CD8-positive, alpha-beta T cell (primary cell): ENCODE measurements at regions of chr4 and their contacts with region 1.

Region 1: GRCh38 chr4:55742655-55743202 is 76.9 kb upstream of the EXOC1L start:
- DNase-seq: no peak
- ATAC-seq: no peak
- H3K4me3 ChIP-seq: no peak overlapping the region
- H3K4me3 Mint-ChIP-seq: no peak overlapping the region
- H3K27ac ChIP-seq: no peak overlapping the region
- H3K27ac Mint-ChIP-seq: no peak overlapping the region
- H3K4me1 ChIP-seq: no peaks in the 10 kb centered on the region
- H3K4me1 Mint-ChIP-seq: no peaks in the 10 kb centered on the region
- H3K27me3 ChIP-seq: no peaks in the 10 kb centered on the region
- H3K27me3 Mint-ChIP-seq: peaks cover 22% of the 10 kb centered on the region
- CTCF ChIP-seq: no peak

Region 2: DNA sequence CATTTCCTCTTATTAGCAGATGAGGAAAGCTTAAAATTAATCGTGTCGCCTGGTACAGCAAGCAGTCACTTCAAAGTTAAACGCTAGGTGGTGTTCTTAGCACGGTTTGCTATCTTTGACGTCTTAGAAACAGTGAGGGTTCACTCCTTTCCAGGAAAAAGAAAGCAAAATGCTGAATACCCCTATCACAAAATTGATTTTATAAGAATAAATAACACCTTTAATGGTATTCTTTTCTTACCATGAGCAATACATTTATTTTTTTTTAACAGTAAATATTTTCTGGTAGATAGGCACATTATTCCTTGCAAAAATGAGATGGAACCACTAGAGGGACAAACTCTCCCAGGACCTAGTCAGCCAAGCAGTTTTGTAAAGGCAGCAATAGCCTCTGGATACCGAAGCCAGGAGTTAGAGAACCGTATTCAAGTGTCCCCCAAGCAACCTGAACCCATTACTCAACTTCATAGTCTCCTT is 771.2 kb before region 1 on chr4:
- CTCF ChIA-PET with region 1: no interaction called
- POLR2A ChIA-PET with region 1: no interaction called
- intact Hi-C with region 1: loop called in 1 of 2 experiments (anchors 10 kb)
- DNase-seq: peak in 2 of 9 experiments; percentile 21 to 44
- ATAC-seq: peak; percentile 51
- H3K4me3 ChIP-seq: no peak overlapping the region
- H3K4me3 Mint-ChIP-seq: no peak overlapping the region
- H3K27ac ChIP-seq: no peak overlapping the region
- H3K27ac Mint-ChIP-seq: no peak overlapping the region
- H3K4me1 ChIP-seq: no peaks in the 10 kb centered on the region
- H3K4me1 Mint-ChIP-seq: no peaks in the 10 kb centered on the region
- H3K27me3 ChIP-seq: no peaks in the 10 kb centered on the region
- H3K27me3 Mint-ChIP-seq: peaks cover 12% of the 10 kb centered on the region
- CTCF ChIP-seq: peak; percentile 63